Right lobe of liver (tissue), 6 donors: ENCODE measurements at regions of chr1 and their contacts with region 1.

Region 1: GRCh38 chr1:66571789-66572188 is 37.8 kb downstream of the SGIP1 start:
- DNase-seq: no peak
- ATAC-seq: no peak
- H3K4me3 ChIP-seq: no peak overlapping the region
- H3K27ac ChIP-seq: no peak overlapping the region
- H3K4me1 ChIP-seq: no peaks in the 10 kb centered on the region
- H3K27me3 ChIP-seq: no peaks in the 10 kb centered on the region
- CTCF ChIP-seq: no peak
- POLR2A ChIP-seq: no peak

Region 2: GRCh38 chr1:66396212-66396890 is 175.4 kb before region 1 on chr1:
- intact Hi-C with region 1: no loop called
- DNase-seq: no peak
- ATAC-seq: peak in 2 of 4 donors; percentile 15 to 17
- H3K4me3 ChIP-seq: no peak overlapping the region
- H3K27ac ChIP-seq: peak overlapping the region in 1 of 3 donors; percentile 2
- H3K4me1 ChIP-seq: peaks cover 0 to 19% (median 0%) of the 10 kb centered on the region in 4 donors
- H3K27me3 ChIP-seq: no peaks in the 10 kb centered on the region
- CTCF ChIP-seq: no peak
- POLR2A ChIP-seq: no peak

Region 3: DNA sequence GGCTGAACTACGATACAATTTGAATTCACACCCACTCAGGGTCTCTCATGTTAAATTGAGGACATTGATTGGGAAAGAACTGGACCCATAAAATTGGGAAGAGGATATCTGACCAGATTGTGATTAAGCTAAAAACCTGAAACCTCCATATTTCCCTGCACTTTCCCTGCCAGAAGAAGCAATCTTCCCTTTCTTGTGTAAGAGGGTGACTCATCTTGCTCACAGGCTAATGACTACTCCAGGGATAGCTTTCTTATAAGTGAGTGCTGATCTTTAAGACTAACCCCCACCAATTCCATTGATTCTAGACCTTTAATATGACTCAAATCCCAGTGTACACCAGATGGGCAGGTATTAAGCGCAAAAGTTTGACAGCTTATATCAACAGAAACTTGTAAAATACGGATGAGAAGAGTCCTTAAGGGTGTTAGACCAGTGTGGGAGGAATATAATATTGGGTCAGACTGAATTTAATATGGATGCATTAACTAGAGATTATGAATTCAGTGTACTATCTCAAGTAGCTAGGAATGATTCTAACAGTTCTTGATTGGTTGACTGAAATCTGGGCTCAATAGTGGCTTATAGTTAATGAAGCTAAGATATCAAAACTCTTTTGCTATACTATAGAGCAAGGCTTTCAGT is 49.9 kb before region 1 on chr1:
- intact Hi-C with region 1: loop called in 1 of 2 experiments (anchors 5 kb)
- DNase-seq: no peak
- ATAC-seq: no peak
- H3K4me3 ChIP-seq: no peak overlapping the region
- H3K27ac ChIP-seq: no peak overlapping the region
- H3K4me1 ChIP-seq: no peaks in the 10 kb centered on the region
- H3K27me3 ChIP-seq: no peaks in the 10 kb centered on the region
- CTCF ChIP-seq: no peak
- POLR2A ChIP-seq: no peak